H1 (cell line): ENCODE measurements at regions of chr19 and their contacts with region 1.

Region 1: GRCh38 chr19:48271531-48272151 is 1.8 kb downstream of the ZNF114 start:
- DNase-seq: peak; percentile 51 to 82
- H3K4me3 ChIP-seq: peak overlapping the region; percentile 75 to 97 (median 84)
- H3K27ac ChIP-seq: peak overlapping the region; percentile 93
- H3K4me1 ChIP-seq: peaks cover 0 to 4% (median 3%) of the 10 kb centered on the region in 4 experiments; a peak in 3 of 7 replicates
- H3K27me3 ChIP-seq: no peaks in the 10 kb centered on the region
- CTCF ChIP-seq: no peak
- EP300 ChIP-seq: no peak
- POLR2A ChIP-seq: peak; percentile 48 to 90
- RAD21 ChIP-seq: no peak

Region 2: DNA sequence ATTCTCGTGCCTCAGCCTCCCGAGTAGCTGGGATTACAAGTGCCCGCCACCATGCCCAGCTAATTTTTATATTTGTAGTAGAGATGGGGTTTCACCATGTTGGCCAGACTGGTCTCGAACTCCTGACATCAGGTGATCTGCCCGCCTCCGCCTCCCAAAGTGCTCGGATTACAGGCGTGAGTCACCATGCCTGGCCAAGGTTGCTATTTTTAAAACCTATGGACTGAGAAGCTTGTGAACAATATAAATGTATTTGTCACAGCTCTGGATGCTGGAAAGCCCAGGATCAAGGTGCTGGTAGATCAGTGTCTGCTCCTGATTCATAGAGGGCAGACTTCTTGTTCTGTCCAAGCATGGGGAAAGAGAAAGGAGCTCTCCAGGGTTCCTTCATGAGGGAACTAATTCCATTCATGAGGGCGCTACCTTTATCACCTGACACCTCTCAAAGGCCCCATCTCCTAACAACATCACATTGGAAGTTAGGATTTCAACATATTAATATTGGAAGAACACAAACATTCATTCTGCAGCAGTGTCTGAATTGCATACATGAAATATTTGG is 32.0 kb before region 1 on chr19:
- CTCF ChIA-PET with region 1: no interaction called
- POLR2A ChIA-PET with region 1: no interaction called
- DNase-seq: no peak
- H3K4me3 ChIP-seq: no peak overlapping the region
- H3K27ac ChIP-seq: no peak overlapping the region
- H3K4me1 ChIP-seq: no peaks in the 10 kb centered on the region
- H3K27me3 ChIP-seq: no peaks in the 10 kb centered on the region
- CTCF ChIP-seq: no peak
- EP300 ChIP-seq: no peak
- POLR2A ChIP-seq: no peak
- RAD21 ChIP-seq: no peak

Region 3: GRCh38 chr19:48284896-48285295 is 13.3 kb after region 1 on chr19:
- CTCF ChIA-PET with region 1: interaction called, 212 read pairs
- POLR2A ChIA-PET with region 1: interaction called, 35 read pairs
- DNase-seq: no peak
- H3K4me3 ChIP-seq: no peak overlapping the region
- H3K27ac ChIP-seq: no peak overlapping the region
- H3K4me1 ChIP-seq: peaks cover 0 to 3% (median 0%) of the 10 kb centered on the region in 4 experiments; a peak in 2 of 7 replicates
- H3K27me3 ChIP-seq: no peaks in the 10 kb centered on the region
- CTCF ChIP-seq: no peak
- EP300 ChIP-seq: no peak
- POLR2A ChIP-seq: no peak
- RAD21 ChIP-seq: no peak

Region 4: DNA sequence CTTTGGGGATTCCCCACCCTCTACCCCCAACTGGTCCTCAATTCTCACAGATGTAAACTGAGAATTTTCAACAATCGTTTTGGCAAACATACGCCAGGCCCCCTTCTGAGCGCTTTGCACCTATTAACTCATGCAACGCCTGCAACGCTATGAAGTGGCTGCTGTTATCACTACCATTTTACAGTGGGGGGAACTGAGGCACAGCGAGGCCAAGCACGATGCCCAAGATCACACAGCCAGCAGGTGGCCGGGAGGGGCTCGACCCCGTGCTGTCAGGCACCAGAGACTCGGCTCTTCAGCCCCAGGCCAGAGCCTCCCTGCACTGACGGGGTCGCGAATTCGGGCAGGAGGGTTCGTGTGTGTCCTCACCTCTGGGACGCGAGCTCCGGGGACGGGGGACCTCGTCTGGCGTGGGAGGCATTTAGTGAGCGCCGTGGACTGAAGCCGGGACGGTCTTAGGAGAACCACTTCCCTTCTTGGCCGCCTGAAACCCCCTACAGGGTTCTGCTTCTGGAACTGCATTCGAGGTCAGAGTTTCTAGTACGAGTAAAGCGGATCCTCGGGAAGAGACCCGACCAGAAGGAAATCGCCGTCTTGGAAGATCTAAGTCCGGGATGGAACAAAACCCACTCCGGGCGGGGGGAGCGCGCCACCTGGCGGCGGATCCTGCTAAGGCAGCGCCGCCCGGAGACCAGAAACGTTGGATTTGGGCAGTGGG is 19.3 kb after region 1 on chr19:
- CTCF ChIA-PET with region 1: interaction called, 212 read pairs
- POLR2A ChIA-PET with region 1: interaction called, 35 read pairs
- DNase-seq: peak; percentile 81 to 95
- H3K4me3 ChIP-seq: peak overlapping the region; percentile 28 to 61 (median 51); a peak in 7 of 8 replicates
- H3K27ac ChIP-seq: peak overlapping the region; percentile 33; the same call in 1 of the 2 replicates
- H3K4me1 ChIP-seq: peaks cover 0 to 12% (median 4%) of the 10 kb centered on the region in 4 experiments; a peak in 4 of 7 replicates
- H3K27me3 ChIP-seq: no peaks in the 10 kb centered on the region
- CTCF ChIP-seq: peak; percentile 93 to 98 (median 95)
- EP300 ChIP-seq: no peak
- POLR2A ChIP-seq: peak in 1 of 2 experiments; percentile 44; a peak in 1 of 3 replicates
- RAD21 ChIP-seq: peak; percentile 75 to 82

Region 5: DNA sequence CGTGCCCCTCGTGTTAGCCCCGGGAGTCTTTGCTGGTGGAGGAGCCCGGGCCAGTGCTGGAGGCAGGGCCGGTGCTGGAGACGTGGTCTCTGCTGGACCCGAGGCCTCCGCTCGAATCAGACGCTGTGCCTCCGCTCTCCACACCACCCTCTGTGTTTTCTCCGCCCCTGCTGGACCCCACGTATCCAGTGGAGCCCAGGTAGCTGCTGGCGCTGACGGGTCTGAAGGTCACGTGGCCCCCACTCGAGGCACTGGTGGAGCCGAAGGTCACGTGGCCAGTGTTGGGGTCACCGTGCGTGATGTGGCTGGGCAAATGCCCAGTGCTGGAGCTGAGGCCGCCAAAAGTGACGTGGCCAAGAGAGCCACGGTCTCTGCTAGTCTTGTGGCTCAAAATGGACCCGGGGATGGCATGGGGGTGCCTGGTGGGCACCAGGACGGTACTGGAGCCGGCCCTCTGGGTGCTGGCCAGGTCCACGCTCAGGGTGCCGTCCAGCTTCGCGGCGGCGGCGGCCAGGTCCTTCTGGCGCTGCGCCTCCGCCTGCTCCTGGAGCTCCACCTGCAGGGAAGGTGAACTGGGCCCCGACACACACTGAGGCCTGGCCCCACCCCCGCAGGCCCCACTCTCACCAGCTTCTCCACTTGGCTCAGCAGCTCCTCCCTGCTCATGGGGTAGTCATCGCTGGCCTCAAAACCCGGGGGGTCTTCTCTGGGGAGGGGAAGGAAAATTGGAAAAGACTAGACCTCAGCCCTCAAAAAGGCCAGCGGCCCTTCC is 25.5 kb after region 1 on chr19:
- CTCF ChIA-PET with region 1: interaction called, 212 read pairs
- POLR2A ChIA-PET with region 1: interaction called, 19 read pairs
- DNase-seq: peak in 1 of 2 experiments; percentile 60
- H3K4me3 ChIP-seq: no peak overlapping the region
- H3K27ac ChIP-seq: no peak overlapping the region
- H3K4me1 ChIP-seq: peaks cover 0 to 14% (median under 1%) of the 10 kb centered on the region in 4 experiments; a peak in 3 of 7 replicates
- H3K27me3 ChIP-seq: no peaks in the 10 kb centered on the region
- CTCF ChIP-seq: peak; percentile 1 to 18 (median 13); a peak in 2 of 4 replicates
- EP300 ChIP-seq: no peak
- POLR2A ChIP-seq: no peak
- RAD21 ChIP-seq: 0 out of 4 replicates have a peak, but pooled peaks have one; percentile 9 to 20